ENCODE measurements at regions of chr2 and their contacts with region 1.

Region 1: DNA sequence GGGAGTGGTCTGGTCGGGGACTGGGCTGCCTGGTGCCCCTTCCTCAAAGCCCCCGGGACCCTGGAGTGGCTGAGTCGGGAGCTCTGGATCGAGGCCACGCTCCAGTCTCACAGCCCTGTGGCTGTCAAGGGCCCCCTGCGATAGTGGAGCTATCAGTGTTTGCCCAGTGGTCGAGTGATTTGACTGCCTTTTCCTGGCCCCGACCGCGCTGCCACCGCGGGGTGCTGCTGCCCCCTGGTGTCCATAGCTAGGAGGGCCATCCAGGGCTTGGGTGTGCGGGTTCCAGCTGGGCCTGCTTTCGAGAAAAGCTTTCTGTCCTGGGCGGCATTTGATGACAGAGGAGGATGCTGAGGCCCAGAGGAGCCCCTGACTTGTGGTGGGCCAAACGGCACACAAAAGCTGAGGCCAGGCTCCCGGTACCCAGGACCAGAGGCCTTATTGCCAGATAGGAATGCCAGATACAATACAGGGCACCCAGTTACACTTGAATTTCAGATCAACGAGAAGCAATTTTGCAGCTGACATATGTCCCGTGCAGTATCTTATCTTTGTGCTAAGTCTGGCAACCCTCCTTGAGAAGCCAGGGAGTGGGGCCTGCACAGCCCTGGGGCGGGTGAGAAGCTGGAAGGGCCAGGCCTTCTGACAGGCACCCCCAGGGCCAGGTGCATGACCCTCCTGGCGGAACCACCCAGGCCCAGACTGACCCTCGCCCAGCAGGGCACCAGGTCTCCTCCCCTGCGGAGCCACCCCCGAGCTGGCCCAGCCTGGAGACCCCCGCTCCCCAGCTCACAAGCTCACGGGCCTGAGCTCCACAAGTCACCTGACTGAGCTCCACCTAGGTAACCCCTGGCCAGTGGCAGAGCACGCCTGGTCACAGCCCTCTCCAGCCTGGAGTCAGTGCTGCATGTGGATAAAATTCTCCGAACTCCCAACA is 13.0 kb downstream of the ODC1 start:
- DNase-seq: peak; percentile 89
- CTCF ChIP-seq: peak; percentile 96

Region 2: DNA sequence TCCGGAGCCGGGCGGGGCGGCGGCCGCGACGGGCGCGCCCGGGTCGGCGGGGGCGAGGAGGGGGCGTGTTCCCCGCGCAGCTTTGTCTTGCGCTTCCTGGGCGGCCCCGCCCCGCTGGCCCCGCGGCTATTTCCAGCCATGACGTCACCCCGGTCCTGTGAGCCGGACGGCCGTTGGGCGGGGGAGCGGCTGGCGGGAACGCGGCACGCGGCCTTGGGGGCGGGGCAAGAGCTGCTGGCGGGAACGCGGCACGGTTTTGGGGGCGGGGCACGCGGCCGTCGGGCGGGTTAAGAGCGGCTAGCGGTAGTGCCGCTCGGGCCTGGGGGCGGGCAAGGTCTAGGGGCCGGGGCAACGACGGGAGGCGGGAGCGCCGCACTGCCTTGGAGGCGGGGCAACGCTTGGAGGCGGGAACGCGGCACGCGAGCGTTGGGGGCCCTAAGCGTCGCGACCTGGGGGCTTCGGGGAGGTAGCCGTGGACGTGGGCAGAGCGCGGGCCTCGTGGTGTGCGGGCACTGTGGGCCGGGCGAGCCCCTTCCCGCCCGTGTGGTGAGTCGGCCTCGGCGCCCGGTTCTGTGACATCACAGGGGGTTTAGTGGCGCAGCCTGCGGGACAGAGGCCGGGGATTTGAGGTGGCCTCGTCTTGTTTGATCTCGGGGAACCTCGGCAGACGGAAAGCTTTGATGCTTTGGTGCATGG is 391.1 kb before region 1 on chr2:
- CTCF ChIA-PET with region 1: interaction called, 10 read pairs
- POLR2A ChIA-PET with region 1: no interaction called
- DNase-seq: peak; percentile 93
- CTCF ChIP-seq: no peak

Region 3: GRCh38 chr2:10091182-10091888 is 343.8 kb before region 1 on chr2:
- CTCF ChIA-PET with region 1: interaction called, 15 read pairs
- POLR2A ChIA-PET with region 1: no interaction called
- DNase-seq: no peak
- CTCF ChIP-seq: peak; percentile 14

Region 4: GRCh38 chr2:10141736-10142642 is 293.2 kb before region 1 on chr2:
- CTCF ChIA-PET with region 1: interaction called, 36 read pairs
- POLR2A ChIA-PET with region 1: interaction called, 3 read pairs
- DNase-seq: no peak
- CTCF ChIP-seq: peak; percentile 67

Region 5: DNA sequence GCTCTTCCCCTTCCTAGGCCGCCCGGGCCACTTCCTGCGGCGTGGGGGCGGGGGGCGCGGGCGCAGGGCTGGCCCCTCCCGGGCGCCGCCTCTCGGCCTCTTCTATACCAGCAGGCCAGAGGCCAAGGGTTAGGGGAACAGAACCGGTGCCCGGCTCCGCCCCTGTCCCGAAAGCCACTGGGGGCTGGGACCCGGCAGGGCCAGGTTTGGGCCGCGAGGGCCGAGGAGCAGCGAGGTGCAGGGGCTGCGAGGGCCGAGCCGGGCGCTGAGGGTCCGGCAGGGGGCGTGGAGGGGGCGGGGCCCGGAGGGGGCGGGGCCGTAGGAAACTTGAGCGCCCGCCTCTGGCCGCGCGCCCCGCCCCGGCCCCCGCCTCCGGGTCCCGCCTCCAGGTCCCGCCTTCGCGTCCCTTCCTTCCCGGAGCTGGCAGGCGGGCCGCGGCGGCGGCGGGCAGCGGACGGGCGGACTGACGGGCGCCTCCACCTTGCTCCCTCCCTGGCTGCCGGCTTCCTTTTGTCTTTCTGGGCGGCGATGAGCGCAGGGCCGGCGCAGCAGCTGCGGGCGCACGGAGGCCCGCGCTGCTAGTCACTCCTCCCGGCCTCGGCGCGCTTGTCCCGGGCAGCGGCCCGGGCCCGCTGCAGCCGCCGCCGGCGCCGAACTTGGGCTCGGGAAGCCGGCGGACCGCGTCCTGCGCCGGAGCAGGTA is 132.5 kb before region 1 on chr2 and contains the start of gene HPCAL1:
- CTCF ChIA-PET with region 1: interaction called, 15 read pairs
- POLR2A ChIA-PET with region 1: no interaction called
- DNase-seq: peak; percentile 95
- CTCF ChIP-seq: peak; percentile 28

Region 6: GRCh38 chr2:10414000-10414451 is 21.1 kb before region 1 on chr2:
- CTCF ChIA-PET with region 1: interaction called, 168 read pairs
- POLR2A ChIA-PET with region 1: interaction called, 3 read pairs
- DNase-seq: peak; percentile 54
- CTCF ChIP-seq: no peak

Measured in GM10248 (cell line).